T-cell (primary cell): ENCODE measurements at regions of chr10 and their contacts with region 1.

Region 1: GRCh38 chr10:87079106-87079836 is 15.4 kb downstream of the GLUD1 start:
- DNase-seq: no peak
- ATAC-seq: no peak
- H3K4me3 ChIP-seq: no peak overlapping the region
- H3K4me3 Mint-ChIP-seq: no peak overlapping the region
- H3K27ac ChIP-seq: no peak overlapping the region
- H3K27ac Mint-ChIP-seq: no peak overlapping the region
- H3K4me1 ChIP-seq: peaks cover 0 to 6% of the 10 kb centered on the region in 2 experiments
- H3K4me1 Mint-ChIP-seq: peaks cover 30 to 40% (median 38%) of the 10 kb centered on the region in 3 donors
- H3K27me3 ChIP-seq: no peaks in the 10 kb centered on the region
- H3K27me3 Mint-ChIP-seq: no peaks in the 10 kb centered on the region

Region 2: GRCh38 chr10:86992451-86992850 is 86.8 kb before region 1 on chr10:
- CTCF ChIA-PET with region 1: no interaction called
- POLR2A ChIA-PET with region 1: no interaction called
- DNase-seq: no peak
- ATAC-seq: no peak
- H3K4me3 ChIP-seq: no peak overlapping the region
- H3K4me3 Mint-ChIP-seq: no peak overlapping the region
- H3K27ac ChIP-seq: no peak overlapping the region
- H3K27ac Mint-ChIP-seq: no peak overlapping the region
- H3K4me1 ChIP-seq: no peaks in the 10 kb centered on the region
- H3K4me1 Mint-ChIP-seq: no peaks in the 10 kb centered on the region
- H3K27me3 ChIP-seq: no peaks in the 10 kb centered on the region
- H3K27me3 Mint-ChIP-seq: peaks cover 20% of the 10 kb centered on the region in 2 donors

Region 3: DNA sequence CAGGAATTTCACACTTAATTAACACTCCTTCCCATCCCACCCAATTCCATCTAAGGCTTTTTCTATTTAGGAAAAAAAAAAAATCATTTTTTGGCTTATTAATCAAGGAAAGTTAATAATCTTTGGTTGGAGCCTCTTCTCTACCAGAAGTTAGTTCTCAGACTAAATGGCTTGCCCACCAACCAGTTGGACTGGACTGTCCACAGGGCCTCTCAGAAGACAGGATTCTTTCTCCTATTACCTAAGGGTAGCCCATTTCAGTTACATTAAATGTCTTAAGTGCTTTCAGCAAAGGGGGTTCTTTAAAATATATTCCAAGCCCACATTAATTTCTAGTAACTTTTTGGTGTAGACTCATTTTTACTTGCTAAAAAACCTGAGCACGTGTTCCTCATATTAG is 19.9 kb before region 1 on chr10:
- CTCF ChIA-PET with region 1: no interaction called
- POLR2A ChIA-PET with region 1: no interaction called
- DNase-seq: no peak
- ATAC-seq: no peak
- H3K4me3 ChIP-seq: no peak overlapping the region
- H3K4me3 Mint-ChIP-seq: no peak overlapping the region
- H3K27ac ChIP-seq: no peak overlapping the region
- H3K27ac Mint-ChIP-seq: no peak overlapping the region
- H3K4me1 ChIP-seq: no peaks in the 10 kb centered on the region
- H3K4me1 Mint-ChIP-seq: no peaks in the 10 kb centered on the region
- H3K27me3 ChIP-seq: no peaks in the 10 kb centered on the region
- H3K27me3 Mint-ChIP-seq: no peaks in the 10 kb centered on the region

Region 4: DNA sequence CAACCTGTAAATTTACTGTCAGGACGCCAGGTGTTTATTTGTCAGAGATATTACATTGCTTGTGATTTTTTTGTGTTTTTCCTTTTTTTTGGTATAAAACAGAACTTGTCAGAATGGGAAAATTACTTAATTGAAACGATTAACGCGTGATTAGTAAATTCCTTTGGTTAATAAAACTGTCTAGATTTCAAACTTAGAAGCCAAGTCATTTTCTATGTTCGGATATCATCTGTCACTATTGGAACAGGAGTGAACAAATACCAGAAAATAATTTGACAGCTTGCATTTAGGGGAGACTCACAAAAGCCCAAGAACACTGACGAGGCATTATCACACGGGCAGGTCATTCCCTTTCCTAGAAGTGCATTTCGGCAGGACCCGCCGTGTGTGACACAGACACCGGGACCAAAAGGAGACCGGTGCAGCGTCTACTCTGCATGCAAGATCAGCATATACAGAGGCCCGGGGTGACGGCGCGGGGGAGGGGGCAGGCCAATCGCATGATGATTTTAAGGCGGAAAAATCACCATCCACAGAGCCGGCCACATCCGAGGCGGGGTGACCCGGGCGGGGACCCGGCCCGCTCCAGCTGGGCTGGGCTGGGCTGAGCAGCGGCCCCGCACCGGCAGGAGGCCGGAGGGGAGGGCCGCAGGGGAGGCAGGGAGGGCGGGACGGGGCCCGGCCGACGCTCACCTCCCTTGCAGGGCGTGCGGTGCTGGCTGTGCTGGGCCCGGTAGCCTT is 14.5 kb after region 1 on chr10:
- CTCF ChIA-PET with region 1: interaction called in 1 of 2 experiments, 4 read pairs
- POLR2A ChIA-PET with region 1: interaction called in 1 of 2 experiments, 10 read pairs
- DNase-seq: peak; percentile 9 to 66 (median 44)
- ATAC-seq: peak; percentile 2 to 6 (median 5)
- H3K4me3 ChIP-seq: peak overlapping the region; percentile 46 to 70
- H3K4me3 Mint-ChIP-seq: peak overlapping the region; percentile 85 to 91 (median 90)
- H3K27ac ChIP-seq: peak overlapping the region; percentile 86
- H3K27ac Mint-ChIP-seq: peak overlapping the region; percentile 89 to 91
- H3K4me1 ChIP-seq: peaks cover 16 to 32% of the 10 kb centered on the region in 2 experiments
- H3K4me1 Mint-ChIP-seq: peaks cover 54 to 70% (median 64%) of the 10 kb centered on the region in 3 donors
- H3K27me3 ChIP-seq: no peaks in the 10 kb centered on the region
- H3K27me3 Mint-ChIP-seq: no peaks in the 10 kb centered on the region

Region 5: DNA sequence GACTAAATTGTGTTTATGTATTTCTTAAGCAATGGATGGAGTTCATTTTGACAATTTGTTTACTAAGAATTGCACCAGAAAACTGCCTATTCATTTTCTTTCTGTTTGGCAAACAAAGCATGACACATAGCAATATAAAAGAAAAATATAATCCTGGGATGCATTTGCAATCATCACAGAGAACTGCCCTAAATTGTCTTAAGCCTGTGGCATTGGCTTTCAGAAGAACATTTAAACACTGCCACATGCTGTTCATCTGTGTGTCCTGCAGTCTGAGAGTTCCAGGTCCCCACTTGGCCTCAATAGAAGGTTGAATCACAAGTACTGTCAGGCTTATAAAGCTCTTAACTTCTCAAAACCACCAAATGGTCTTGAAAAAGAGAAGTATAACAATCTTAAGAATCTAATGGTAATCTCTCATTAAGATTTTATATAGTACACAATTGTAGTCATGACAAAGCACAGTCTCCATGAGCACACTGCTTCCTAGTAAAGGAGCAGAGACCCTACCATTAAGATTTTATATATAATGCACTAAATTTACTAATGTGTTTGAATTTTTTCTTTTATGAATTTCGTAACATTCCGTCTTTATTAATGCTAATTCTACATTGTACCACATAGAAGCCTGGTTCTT is 1474.0 kb after region 1 on chr10:
- CTCF ChIA-PET with region 1: no interaction called
- POLR2A ChIA-PET with region 1: no interaction called
- DNase-seq: peak in 30 of 35 experiments; percentile 2 to 71 (median 17)
- ATAC-seq: peak; percentile 72 to 85 (median 78)
- H3K4me3 ChIP-seq: no peak overlapping the region
- H3K4me3 Mint-ChIP-seq: no peak overlapping the region
- H3K27ac ChIP-seq: no peak overlapping the region
- H3K27ac Mint-ChIP-seq: no peak overlapping the region
- H3K4me1 ChIP-seq: no peaks in the 10 kb centered on the region
- H3K4me1 Mint-ChIP-seq: no peaks in the 10 kb centered on the region
- H3K27me3 ChIP-seq: no peaks in the 10 kb centered on the region
- H3K27me3 Mint-ChIP-seq: no peaks in the 10 kb centered on the region